CD8-positive, alpha-beta T cell (primary cell): ENCODE measurements at regions of chr3 and their contacts with region 1.

Region 1: DNA sequence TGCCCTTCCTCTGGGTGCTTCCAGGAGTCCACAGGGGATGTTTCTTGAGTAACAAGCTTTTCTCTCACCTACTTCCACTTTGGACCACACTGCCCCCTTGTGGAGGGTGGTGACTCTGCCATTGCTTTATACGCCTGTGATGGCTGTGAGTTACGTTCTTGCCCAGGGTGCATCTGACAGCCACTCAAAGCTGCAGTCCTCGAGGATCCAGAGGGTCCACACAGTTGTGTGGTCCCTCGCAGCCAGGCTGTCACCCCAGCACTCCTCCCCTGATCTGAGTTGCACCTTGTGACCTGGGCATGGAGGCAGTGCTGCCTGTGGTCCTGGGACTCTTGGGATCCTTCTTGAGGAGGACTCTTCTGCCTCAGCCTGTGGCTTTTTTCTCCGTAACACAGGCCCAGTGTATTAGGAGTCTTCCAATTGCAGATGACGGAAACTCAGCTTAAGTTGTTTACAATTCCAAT is 23.4 kb downstream of the FOXL2 start:
- DNase-seq: peak; percentile 72 to 88 (median 85)
- ATAC-seq: peak; percentile 97
- H3K4me3 ChIP-seq: no peak overlapping the region
- H3K4me3 Mint-ChIP-seq: no peak overlapping the region
- H3K27ac ChIP-seq: no peak overlapping the region
- H3K27ac Mint-ChIP-seq: no peak overlapping the region
- H3K4me1 ChIP-seq: no peaks in the 10 kb centered on the region
- H3K4me1 Mint-ChIP-seq: no peaks in the 10 kb centered on the region
- H3K27me3 ChIP-seq: no peaks in the 10 kb centered on the region
- H3K27me3 Mint-ChIP-seq: peaks cover 15% of the 10 kb centered on the region
- CTCF ChIP-seq: peak; percentile 81

Region 2: DNA sequence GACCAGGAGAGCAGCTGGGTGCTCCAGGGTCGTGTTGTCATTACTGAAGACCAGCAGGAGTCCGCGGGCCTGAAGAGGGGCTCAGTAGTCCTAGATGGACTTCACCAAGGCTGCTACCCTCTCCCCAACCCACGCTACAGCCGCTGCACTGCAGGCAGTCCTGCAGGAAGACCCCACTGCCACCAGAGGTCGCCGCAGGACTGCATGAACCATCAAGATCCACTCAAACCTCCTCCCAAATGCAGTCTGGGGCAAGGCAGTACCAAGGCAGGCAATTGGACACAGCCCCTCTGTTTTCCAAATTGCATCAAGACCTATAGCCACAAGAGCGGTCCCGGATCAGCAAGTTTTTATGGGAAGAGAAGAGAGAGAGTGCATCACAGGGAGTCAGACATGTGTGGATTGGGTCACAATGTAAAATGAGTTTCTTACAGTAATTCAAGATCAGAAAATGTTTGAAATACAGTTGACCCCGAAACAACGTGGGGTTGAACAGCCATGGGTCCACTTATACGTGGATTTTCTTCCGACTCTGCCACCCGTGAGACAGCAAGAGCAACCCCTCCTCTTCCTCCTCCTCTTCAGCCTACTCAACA is 854.9 kb before region 1 on chr3:
- CTCF ChIA-PET with region 1: interaction called, 6 read pairs
- POLR2A ChIA-PET with region 1: no interaction called
- intact Hi-C with region 1: loop called in 1 of 2 experiments (anchors 2 kb)
- DNase-seq: peak; percentile 53 to 80 (median 68)
- ATAC-seq: peak; percentile 79
- H3K4me3 ChIP-seq: no peak overlapping the region
- H3K4me3 Mint-ChIP-seq: no peak overlapping the region
- H3K27ac ChIP-seq: no peak overlapping the region
- H3K27ac Mint-ChIP-seq: no peak overlapping the region
- H3K4me1 ChIP-seq: no peaks in the 10 kb centered on the region
- H3K4me1 Mint-ChIP-seq: no peaks in the 10 kb centered on the region
- H3K27me3 ChIP-seq: no peaks in the 10 kb centered on the region
- H3K27me3 Mint-ChIP-seq: peaks cover 9% of the 10 kb centered on the region
- CTCF ChIP-seq: peak; percentile 79

Region 3: GRCh38 chr3:138180375-138181029 is 743.1 kb before region 1 on chr3:
- CTCF ChIA-PET with region 1: interaction called, 3 read pairs
- POLR2A ChIA-PET with region 1: no interaction called
- intact Hi-C with region 1: loop called (anchors 5 kb)
- DNase-seq: peak in 5 of 9 experiments; percentile 20 to 64 (median 32)
- ATAC-seq: peak; percentile 91
- H3K4me3 ChIP-seq: no peak overlapping the region
- H3K4me3 Mint-ChIP-seq: no peak overlapping the region
- H3K27ac ChIP-seq: no peak overlapping the region
- H3K27ac Mint-ChIP-seq: no peak overlapping the region
- H3K4me1 ChIP-seq: no peaks in the 10 kb centered on the region
- H3K4me1 Mint-ChIP-seq: no peaks in the 10 kb centered on the region
- H3K27me3 ChIP-seq: peaks cover 0 to 3% of the 10 kb centered on the region in 2 experiments
- H3K27me3 Mint-ChIP-seq: peaks cover 5% of the 10 kb centered on the region
- CTCF ChIP-seq: no peak

Region 4: GRCh38 chr3:138417559-138417982 is 506.0 kb before region 1 on chr3:
- CTCF ChIA-PET with region 1: interaction called, 40 read pairs
- POLR2A ChIA-PET with region 1: no interaction called
- intact Hi-C with region 1: loop called (anchors 1 kb)
- DNase-seq: peak; percentile 29 to 71 (median 63)
- ATAC-seq: peak; percentile 69
- H3K4me3 ChIP-seq: no peak overlapping the region
- H3K4me3 Mint-ChIP-seq: no peak overlapping the region
- H3K27ac ChIP-seq: no peak overlapping the region
- H3K27ac Mint-ChIP-seq: no peak overlapping the region
- H3K4me1 ChIP-seq: no peaks in the 10 kb centered on the region
- H3K4me1 Mint-ChIP-seq: no peaks in the 10 kb centered on the region
- H3K27me3 ChIP-seq: peaks cover 0 to 3% of the 10 kb centered on the region in 2 experiments
- H3K27me3 Mint-ChIP-seq: peaks cover 7% of the 10 kb centered on the region
- CTCF ChIP-seq: peak; percentile 71

Region 5: GRCh38 chr3:138686771-138687221 is 236.8 kb before region 1 on chr3:
- CTCF ChIA-PET with region 1: interaction called, 326 read pairs
- POLR2A ChIA-PET with region 1: no interaction called
- intact Hi-C with region 1: no loop called
- DNase-seq: peak in 2 of 9 experiments; percentile 23 to 38
- ATAC-seq: no peak
- H3K4me3 ChIP-seq: no peak overlapping the region
- H3K4me3 Mint-ChIP-seq: no peak overlapping the region
- H3K27ac ChIP-seq: peak overlapping the region in 1 of 2 experiments; percentile 17
- H3K27ac Mint-ChIP-seq: peak overlapping the region; percentile 16
- H3K4me1 ChIP-seq: no peaks in the 10 kb centered on the region
- H3K4me1 Mint-ChIP-seq: peaks cover 2% of the 10 kb centered on the region
- H3K27me3 ChIP-seq: no peaks in the 10 kb centered on the region
- H3K27me3 Mint-ChIP-seq: no peaks in the 10 kb centered on the region
- CTCF ChIP-seq: no peak

Region 6: GRCh38 chr3:138909904-138910303 is 13.7 kb before region 1 on chr3:
- CTCF ChIA-PET with region 1: interaction called, 24 read pairs
- POLR2A ChIA-PET with region 1: no interaction called
- intact Hi-C with region 1: no loop called
- DNase-seq: no peak
- ATAC-seq: no peak
- H3K4me3 ChIP-seq: no peak overlapping the region
- H3K4me3 Mint-ChIP-seq: no peak overlapping the region
- H3K27ac ChIP-seq: no peak overlapping the region
- H3K27ac Mint-ChIP-seq: no peak overlapping the region
- H3K4me1 ChIP-seq: no peaks in the 10 kb centered on the region
- H3K4me1 Mint-ChIP-seq: peaks cover under 1% of the 10 kb centered on the region
- H3K27me3 ChIP-seq: no peaks in the 10 kb centered on the region
- H3K27me3 Mint-ChIP-seq: no peaks in the 10 kb centered on the region
- CTCF ChIP-seq: no peak

Region 7: GRCh38 chr3:138935848-138936740 is 12.5 kb after region 1 on chr3:
- CTCF ChIA-PET with region 1: interaction called, 29 read pairs
- POLR2A ChIA-PET with region 1: no interaction called
- intact Hi-C with region 1: no loop called
- DNase-seq: peak; percentile 41 to 80 (median 72)
- ATAC-seq: peak; percentile 89
- H3K4me3 ChIP-seq: peak overlapping the region; percentile 33 to 50
- H3K4me3 Mint-ChIP-seq: peak overlapping the region; percentile 75
- H3K27ac ChIP-seq: no peak overlapping the region
- H3K27ac Mint-ChIP-seq: no peak overlapping the region
- H3K4me1 ChIP-seq: peaks cover 46% of the 10 kb centered on the region
- H3K4me1 Mint-ChIP-seq: peaks cover 29% of the 10 kb centered on the region
- H3K27me3 ChIP-seq: peaks cover 24 to 44% of the 10 kb centered on the region in 2 experiments
- H3K27me3 Mint-ChIP-seq: peaks cover 64% of the 10 kb centered on the region
- CTCF ChIP-seq: peak; percentile 90

Region 8: DNA sequence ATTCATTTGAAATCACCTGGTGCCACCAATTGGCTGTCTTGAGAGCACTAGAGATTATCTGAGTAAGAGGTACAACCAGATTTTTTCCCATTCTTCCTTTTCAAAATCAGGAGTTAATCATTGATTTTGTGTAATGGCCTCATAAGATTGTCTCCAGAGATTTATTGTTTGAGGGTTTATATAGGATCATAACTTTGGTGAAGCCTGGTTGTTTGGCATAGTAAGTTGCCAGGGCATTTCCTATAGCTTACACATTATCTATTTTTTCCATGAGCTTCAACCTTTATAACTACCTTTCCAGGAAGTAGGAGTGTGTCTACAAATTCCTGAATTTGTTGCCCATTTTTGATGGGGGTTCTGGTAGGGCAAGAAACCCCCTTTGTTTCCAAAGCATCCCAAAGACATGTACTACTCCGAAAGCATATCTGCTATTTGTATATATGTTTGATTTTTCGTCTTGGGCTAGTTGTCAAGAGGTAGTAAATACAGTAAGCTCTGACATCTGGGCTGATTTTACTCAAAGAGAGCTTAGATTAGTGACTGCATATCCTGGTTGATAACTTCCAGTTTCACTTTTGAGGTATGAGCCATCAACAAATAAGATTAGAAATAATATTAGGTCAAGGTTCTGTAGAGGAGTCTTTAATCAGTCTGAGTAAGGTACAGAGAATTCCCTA is 108.9 kb after region 1 on chr3:
- CTCF ChIA-PET with region 1: no interaction called
- POLR2A ChIA-PET with region 1: no interaction called
- intact Hi-C with region 1: no loop called
- DNase-seq: no peak
- ATAC-seq: no peak
- H3K4me3 ChIP-seq: no peak overlapping the region
- H3K4me3 Mint-ChIP-seq: no peak overlapping the region
- H3K27ac ChIP-seq: no peak overlapping the region
- H3K27ac Mint-ChIP-seq: no peak overlapping the region
- H3K4me1 ChIP-seq: no peaks in the 10 kb centered on the region
- H3K4me1 Mint-ChIP-seq: no peaks in the 10 kb centered on the region
- H3K27me3 ChIP-seq: no peaks in the 10 kb centered on the region
- H3K27me3 Mint-ChIP-seq: no peaks in the 10 kb centered on the region
- CTCF ChIP-seq: no peak